ENCODE measurements at regions of chr1 and their contacts with region 1.

Region 1: GRCh38 chr1:31422505-31423319 is 9.7 kb downstream of the SERINC2 start:
- DNase-seq: peak; percentile 82 to 91
- ATAC-seq: peak; percentile 90 to 94
- H3K4me3 ChIP-seq: no peak overlapping the region
- H3K27ac ChIP-seq: peak overlapping the region; percentile 77 to 88 (median 82)
- H3K4me1 ChIP-seq: peaks cover 12 to 26% of the 10 kb centered on the region in 2 donors
- H3K27me3 ChIP-seq: no peaks in the 10 kb centered on the region
- CTCF ChIP-seq: peak; percentile 93 to 98 (median 98)
- POLR2A ChIP-seq: peak; percentile 64 to 67

Region 2: DNA sequence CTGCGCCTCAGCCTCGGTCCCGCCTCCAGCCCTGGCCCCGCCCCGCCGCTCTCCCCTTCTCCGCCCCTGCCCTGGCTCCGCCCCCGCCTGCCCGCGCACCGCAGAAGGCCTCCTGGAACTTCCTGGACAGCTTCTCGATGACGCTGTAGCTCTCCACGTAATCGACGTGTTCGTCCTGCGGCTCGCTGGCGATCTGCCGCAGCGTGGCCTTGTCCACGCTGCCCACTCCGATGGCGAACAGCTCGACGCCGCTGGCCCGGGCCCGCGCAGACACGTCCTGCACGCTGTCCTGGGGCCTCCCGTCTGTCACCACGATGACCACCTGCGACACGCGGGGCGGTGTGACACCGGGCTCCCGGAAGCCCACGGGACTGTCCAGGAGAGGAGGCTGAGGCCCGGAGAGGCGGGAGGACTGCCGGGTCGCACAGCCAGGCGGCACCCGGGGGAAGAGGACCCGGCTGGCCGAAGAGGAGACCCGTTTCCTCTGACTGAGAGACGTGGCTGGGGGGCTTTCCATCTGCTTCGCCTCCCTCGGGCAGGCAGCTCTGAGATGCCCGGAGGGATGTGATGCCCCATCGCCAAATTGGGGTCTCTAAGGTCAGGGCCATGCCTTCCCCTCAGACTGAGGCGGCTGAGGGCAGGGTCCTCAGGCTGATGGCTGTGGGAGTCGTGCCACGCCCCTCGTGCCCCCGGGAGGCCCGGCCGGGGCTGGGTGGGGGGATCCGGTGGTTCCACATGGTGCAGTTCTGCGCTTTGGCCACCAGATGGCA is 703.9 kb before region 1 on chr1:
- in situ Hi-C with region 1: no loop called
- intact Hi-C with region 1: loop called (anchors 5 kb)
- DNase-seq: peak; percentile 71 to 94
- ATAC-seq: peak; percentile 79 to 81
- H3K4me3 ChIP-seq: peak overlapping the region; percentile 60 to 85 (median 73)
- H3K27ac ChIP-seq: peak overlapping the region; percentile 97 to 98 (median 98)
- H3K4me1 ChIP-seq: peaks cover 0 to 3% of the 10 kb centered on the region in 2 donors
- H3K27me3 ChIP-seq: no peaks in the 10 kb centered on the region
- CTCF ChIP-seq: peak; percentile 98 to 100 (median 99)
- POLR2A ChIP-seq: peak; percentile 80 to 85

Region 3: GRCh38 chr1:31182352-31182751 is 240.4 kb before region 1 on chr1:
- in situ Hi-C with region 1: loop called in 3 of 4 experiments (anchors 10 kb)
- intact Hi-C with region 1: loop called (anchors 1 kb)
- DNase-seq: peak; percentile 80 to 83
- ATAC-seq: peak; percentile 88 to 92
- H3K4me3 ChIP-seq: peak overlapping the region; percentile 12 to 46 (median 38)
- H3K27ac ChIP-seq: peak overlapping the region in 3 of 4 donors; percentile 39 to 49 (median 48)
- H3K4me1 ChIP-seq: peaks cover 8 to 16% of the 10 kb centered on the region in 2 donors
- H3K27me3 ChIP-seq: no peaks in the 10 kb centered on the region
- CTCF ChIP-seq: peak; percentile 8 to 59 (median 54)
- POLR2A ChIP-seq: no peak

Region 4: GRCh38 chr1:31296486-31297276 is 126.0 kb before region 1 on chr1 and contains the starts of genes SNRNP40 and ZCCHC17:
- in situ Hi-C with region 1: no loop called
- intact Hi-C with region 1: loop called (anchors 2 kb)
- DNase-seq: peak; percentile 97
- ATAC-seq: peak; percentile 100
- H3K4me3 ChIP-seq: peak within 1 kb of the TSS; percentile 80 to 99 (median 98)
- H3K27ac ChIP-seq: peak within 1 kb of the TSS; percentile 88 to 98 (median 94)
- H3K4me1 ChIP-seq: peaks cover 44% of the 10 kb centered on the region in 2 donors
- H3K27me3 ChIP-seq: no peaks in the 10 kb centered on the region
- CTCF ChIP-seq: peak in 2 of 5 experiments; percentile 21 to 28
- POLR2A ChIP-seq: peak; percentile 78 to 92
- total RNA-seq, gene SNRNP40: 21.9 to 32.1 (median 23.6) TPM
- total RNA-seq, gene ZCCHC17: 14.0 to 26.8 (median 17.5) TPM

Region 5: GRCh38 chr1:31381394-31382287 is 41.1 kb before region 1 on chr1:
- in situ Hi-C with region 1: no loop called
- intact Hi-C with region 1: loop called (anchors 5 kb)
- DNase-seq: peak; percentile 84 to 95
- ATAC-seq: peak; percentile 65 to 74
- H3K4me3 ChIP-seq: peak overlapping the region in 1 of 4 donors; percentile 3
- H3K27ac ChIP-seq: peak overlapping the region; percentile 91 to 97 (median 94)
- H3K4me1 ChIP-seq: peaks cover 60 to 71% of the 10 kb centered on the region in 2 donors
- H3K27me3 ChIP-seq: no peaks in the 10 kb centered on the region
- CTCF ChIP-seq: no peak
- POLR2A ChIP-seq: peak in 1 of 2 donors; percentile 7

Region 6: GRCh38 chr1:31394628-31395193 is 28.0 kb before region 1 on chr1:
- in situ Hi-C with region 1: no loop called
- intact Hi-C with region 1: loop called (anchors 1 kb)
- DNase-seq: peak; percentile 96 to 99
- ATAC-seq: peak; percentile 98 to 99
- H3K4me3 ChIP-seq: peak overlapping the region; percentile 14 to 44 (median 22)
- H3K27ac ChIP-seq: peak overlapping the region; percentile 81 to 90 (median 86)
- H3K4me1 ChIP-seq: peaks cover 5 to 8% of the 10 kb centered on the region in 2 donors
- H3K27me3 ChIP-seq: no peaks in the 10 kb centered on the region
- CTCF ChIP-seq: peak; percentile 91 to 97 (median 95)
- POLR2A ChIP-seq: peak; percentile 53 to 66

Region 7: GRCh38 chr1:31548907-31549808 is 126.4 kb after region 1 on chr1:
- in situ Hi-C with region 1: loop called in 1 of 4 experiments (anchors 10 kb)
- intact Hi-C with region 1: loop called (anchors 2 kb)
- DNase-seq: peak; percentile 60 to 82
- ATAC-seq: peak; percentile 83 to 86
- H3K4me3 ChIP-seq: peak overlapping the region in 3 of 4 donors; percentile 8 to 31 (median 23)
- H3K27ac ChIP-seq: peak overlapping the region; percentile 65 to 79 (median 74)
- H3K4me1 ChIP-seq: peaks cover 14 to 16% of the 10 kb centered on the region in 2 donors
- H3K27me3 ChIP-seq: no peaks in the 10 kb centered on the region
- CTCF ChIP-seq: peak; percentile 87 to 96 (median 93)
- POLR2A ChIP-seq: no peak